A673 (cell line): ENCODE measurements at regions of chr17 and their contacts with region 1.

Region 1: GRCh38 chr17:29293890-29294579 is at the start of gene NUFIP2:
- DNase-seq: peak; percentile 99
- H3K4me3 ChIP-seq: peak within 1 kb of the TSS; percentile 97
- H3K27ac ChIP-seq: peak within 1 kb of the TSS; percentile 89
- H3K4me1 ChIP-seq: peaks cover 23% of the 10 kb centered on the region
- H3K27me3 ChIP-seq: no peaks in the 10 kb centered on the region
- CTCF ChIP-seq: no peak
- total RNA-seq, gene NUFIP2: 80.4 and 93.4 TPM in 2 replicates

Region 2: GRCh38 chr17:29283271-29283895 is 10.7 kb before region 1 on chr17:
- CTCF ChIA-PET with region 1: interaction called, 13 read pairs
- POLR2A ChIA-PET with region 1: no interaction called
- intact Hi-C with region 1: no loop called
- DNase-seq: peak; percentile 41
- H3K4me3 ChIP-seq: no peak overlapping the region
- H3K27ac ChIP-seq: no peak overlapping the region
- H3K4me1 ChIP-seq: peaks cover 4% of the 10 kb centered on the region
- H3K27me3 ChIP-seq: no peaks in the 10 kb centered on the region
- CTCF ChIP-seq: peak; percentile 32; the same call in 1 of the 2 replicates

Region 3: GRCh38 chr17:29389982-29390850 is 96.2 kb after region 1 on chr17 and contains the start of gene TAOK1:
- CTCF ChIA-PET with region 1: no interaction called
- POLR2A ChIA-PET with region 1: no interaction called
- intact Hi-C with region 1: no loop called
- DNase-seq: peak; percentile 99
- H3K4me3 ChIP-seq: peak within 1 kb of the TSS; percentile 90
- H3K27ac ChIP-seq: peak within 1 kb of the TSS; percentile 96
- H3K4me1 ChIP-seq: peaks cover 20% of the 10 kb centered on the region
- H3K27me3 ChIP-seq: no peaks in the 10 kb centered on the region
- CTCF ChIP-seq: no peak
- total RNA-seq, gene TAOK1: 83.8 and 85.5 TPM in 2 replicates